ENCODE measurements at regions of chr2 and their contacts with region 1.

Region 1: DNA sequence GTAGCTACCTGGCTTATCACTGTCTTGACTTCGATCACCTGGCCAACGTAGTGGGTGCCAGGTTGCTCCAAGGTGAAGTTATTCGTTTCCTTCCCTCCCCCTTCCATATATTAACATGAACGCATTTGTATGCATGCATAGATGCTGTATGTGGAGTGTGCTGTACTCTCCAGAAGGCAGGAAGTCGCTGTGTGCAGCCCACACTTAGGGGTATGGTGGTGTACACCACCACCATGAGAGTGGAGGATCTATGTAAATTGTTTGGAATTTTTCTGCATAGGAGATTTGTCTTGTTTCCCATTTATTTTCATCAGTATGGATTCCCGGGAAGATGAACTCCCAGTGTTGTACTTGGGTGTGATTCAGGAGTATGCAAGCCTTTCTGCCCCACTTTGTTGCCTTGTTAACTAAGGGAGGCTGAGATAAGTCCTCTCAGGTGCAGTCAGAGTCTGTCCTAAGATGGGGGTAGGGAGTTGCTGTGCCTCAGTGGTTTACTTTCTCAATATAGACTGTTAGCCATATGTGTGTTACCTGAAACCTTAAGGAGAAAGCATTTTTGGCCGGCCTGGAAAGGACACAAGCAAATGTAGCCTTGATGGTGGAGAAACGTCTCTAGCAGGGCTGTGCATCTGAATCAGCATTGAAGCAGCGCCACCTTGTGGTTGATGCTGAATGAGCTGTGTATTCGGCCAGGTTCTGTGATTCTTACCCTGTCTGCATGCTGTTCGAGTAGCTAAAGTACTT is 149.8 kb downstream of the TANC1 start:
- DNase-seq: peak; percentile 91
- ATAC-seq: peak; percentile 97
- H3K4me3 Mint-ChIP-seq: no peak overlapping the region
- H3K27ac Mint-ChIP-seq: no peak overlapping the region
- H3K4me1 Mint-ChIP-seq: peaks cover 5% of the 10 kb centered on the region; the same call in 1 of the 2 replicates
- H3K27me3 Mint-ChIP-seq: no peaks in the 10 kb centered on the region
- CTCF ChIP-seq: peak; percentile 85

Region 2: DNA sequence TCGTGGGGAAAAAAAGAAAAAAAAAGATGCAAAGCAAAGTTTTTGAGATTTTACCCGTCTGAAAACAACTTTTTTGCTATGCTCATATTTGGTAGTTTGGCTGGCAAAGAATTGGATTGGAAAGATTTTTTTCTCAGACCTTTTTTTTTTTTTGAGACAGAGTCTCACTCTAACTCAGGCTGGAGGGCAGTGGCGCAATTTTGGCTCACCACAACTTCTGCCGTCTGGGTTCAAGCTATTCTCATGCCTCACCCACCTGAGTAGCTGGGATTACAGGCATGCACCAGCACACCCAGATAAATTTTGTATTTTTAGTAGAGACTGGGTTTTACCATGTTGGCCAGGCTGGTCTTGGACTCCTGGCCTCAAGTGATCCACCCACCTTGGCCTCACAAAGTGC is 206.2 kb before region 1 on chr2:
- CTCF ChIA-PET with region 1: interaction called, 10 read pairs
- POLR2A ChIA-PET with region 1: no interaction called
- DNase-seq: no peak
- ATAC-seq: no peak
- H3K4me3 Mint-ChIP-seq: no peak overlapping the region
- H3K27ac Mint-ChIP-seq: no peak overlapping the region
- H3K4me1 Mint-ChIP-seq: peaks cover 29% of the 10 kb centered on the region
- H3K27me3 Mint-ChIP-seq: no peaks in the 10 kb centered on the region
- CTCF ChIP-seq: no peak

Region 3: DNA sequence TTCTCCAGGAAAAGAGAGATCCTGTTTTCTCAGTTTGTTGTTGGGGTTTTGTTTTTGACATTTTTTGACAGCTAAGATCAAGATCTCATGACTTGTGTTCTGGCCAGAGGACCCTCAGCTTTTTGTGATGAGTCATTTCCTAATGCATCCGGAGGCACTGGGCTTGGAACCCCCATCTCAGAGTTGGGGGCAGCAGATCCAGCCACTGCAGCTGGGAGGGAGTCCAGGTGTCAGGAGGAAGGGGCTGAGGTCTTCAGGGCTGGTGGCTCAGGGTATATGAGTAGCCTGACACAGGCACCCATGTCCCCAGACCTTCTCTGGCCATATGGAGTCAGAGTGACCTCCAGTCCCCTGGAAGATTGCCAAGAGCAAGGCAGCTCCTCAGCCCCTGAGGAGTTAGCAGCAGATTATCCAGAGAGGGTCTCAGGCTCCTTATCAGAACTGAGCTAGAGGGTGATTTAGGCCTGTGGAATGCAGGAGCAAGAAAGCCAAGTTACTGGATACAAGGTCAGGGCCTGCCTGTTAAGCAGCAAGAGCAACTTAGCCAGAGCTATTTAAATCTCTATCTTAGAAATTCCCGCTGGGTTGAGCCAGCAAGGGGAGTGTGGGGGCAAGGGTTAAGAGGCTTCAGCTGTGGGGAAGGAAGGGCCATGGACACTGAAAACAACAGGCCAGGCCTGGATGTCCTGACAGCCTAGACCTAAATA is 87.5 kb before region 1 on chr2:
- CTCF ChIA-PET with region 1: interaction called, 59 read pairs
- POLR2A ChIA-PET with region 1: no interaction called
- DNase-seq: no peak
- ATAC-seq: peak; percentile 72
- H3K4me3 Mint-ChIP-seq: no peak overlapping the region
- H3K27ac Mint-ChIP-seq: peak overlapping the region; percentile 20
- H3K4me1 Mint-ChIP-seq: peaks cover 52% of the 10 kb centered on the region
- H3K27me3 Mint-ChIP-seq: no peaks in the 10 kb centered on the region
- CTCF ChIP-seq: no peak

Region 4: GRCh38 chr2:159053161-159054031 is 64.9 kb before region 1 on chr2:
- CTCF ChIA-PET with region 1: interaction called, 12 read pairs
- POLR2A ChIA-PET with region 1: no interaction called
- DNase-seq: no peak
- ATAC-seq: no peak
- H3K4me3 Mint-ChIP-seq: no peak overlapping the region
- H3K27ac Mint-ChIP-seq: no peak overlapping the region
- H3K4me1 Mint-ChIP-seq: peaks cover 6% of the 10 kb centered on the region
- H3K27me3 Mint-ChIP-seq: no peaks in the 10 kb centered on the region
- CTCF ChIP-seq: no peak

Region 5: GRCh38 chr2:159129824-159130223 is 11.5 kb after region 1 on chr2:
- CTCF ChIA-PET with region 1: interaction called, 32 read pairs
- POLR2A ChIA-PET with region 1: no interaction called
- DNase-seq: no peak
- ATAC-seq: no peak
- H3K4me3 Mint-ChIP-seq: no peak overlapping the region
- H3K27ac Mint-ChIP-seq: no peak overlapping the region
- H3K4me1 Mint-ChIP-seq: peaks cover 16% of the 10 kb centered on the region
- H3K27me3 Mint-ChIP-seq: no peaks in the 10 kb centered on the region
- CTCF ChIP-seq: no peak